Posterior vena cava (tissue), 2 donors: ENCODE measurements at regions of chr1 and their contacts with region 1.

Region 1: GRCh38 chr1:145918144-145918992 is at the start of gene PEX11B:
- DNase-seq: peak; percentile 96
- total RNA-seq, gene PEX11B: 19.8 to 24.4 TPM

Region 2: DNA sequence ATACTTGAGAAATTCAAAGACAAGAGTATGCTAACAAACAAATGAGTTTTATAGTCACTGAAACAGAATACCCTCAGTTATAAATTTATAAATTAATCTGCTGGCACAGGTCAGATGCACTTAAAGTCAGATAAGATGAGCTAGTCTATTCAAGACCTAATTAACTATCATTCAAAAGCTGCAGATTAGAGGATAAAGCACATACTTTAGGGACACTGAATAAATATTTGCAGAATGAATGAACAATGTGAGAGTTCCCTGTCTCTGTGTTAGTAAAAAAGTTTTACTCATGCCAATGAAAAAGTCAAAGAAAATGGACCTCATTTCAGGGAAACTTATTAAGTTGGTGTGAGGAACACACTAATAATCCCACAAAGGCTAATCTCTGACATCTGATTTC is 152.8 kb before region 1 on chr1:
- intact Hi-C with region 1: no loop called
- DNase-seq: no peak

Region 3: GRCh38 chr1:145858894-145859490 is 59.4 kb before region 1 on chr1 and contains the start of gene PIAS3:
- intact Hi-C with region 1: loop called in 1 of 2 experiments (anchors 10 kb)
- DNase-seq: peak; percentile 98
- total RNA-seq, gene PIAS3: 28.6 to 34.7 TPM

Region 4: GRCh38 chr1:145879775-145880174 is 38.6 kb before region 1 on chr1:
- intact Hi-C with region 1: no loop called
- DNase-seq: no peak

Region 5: DNA sequence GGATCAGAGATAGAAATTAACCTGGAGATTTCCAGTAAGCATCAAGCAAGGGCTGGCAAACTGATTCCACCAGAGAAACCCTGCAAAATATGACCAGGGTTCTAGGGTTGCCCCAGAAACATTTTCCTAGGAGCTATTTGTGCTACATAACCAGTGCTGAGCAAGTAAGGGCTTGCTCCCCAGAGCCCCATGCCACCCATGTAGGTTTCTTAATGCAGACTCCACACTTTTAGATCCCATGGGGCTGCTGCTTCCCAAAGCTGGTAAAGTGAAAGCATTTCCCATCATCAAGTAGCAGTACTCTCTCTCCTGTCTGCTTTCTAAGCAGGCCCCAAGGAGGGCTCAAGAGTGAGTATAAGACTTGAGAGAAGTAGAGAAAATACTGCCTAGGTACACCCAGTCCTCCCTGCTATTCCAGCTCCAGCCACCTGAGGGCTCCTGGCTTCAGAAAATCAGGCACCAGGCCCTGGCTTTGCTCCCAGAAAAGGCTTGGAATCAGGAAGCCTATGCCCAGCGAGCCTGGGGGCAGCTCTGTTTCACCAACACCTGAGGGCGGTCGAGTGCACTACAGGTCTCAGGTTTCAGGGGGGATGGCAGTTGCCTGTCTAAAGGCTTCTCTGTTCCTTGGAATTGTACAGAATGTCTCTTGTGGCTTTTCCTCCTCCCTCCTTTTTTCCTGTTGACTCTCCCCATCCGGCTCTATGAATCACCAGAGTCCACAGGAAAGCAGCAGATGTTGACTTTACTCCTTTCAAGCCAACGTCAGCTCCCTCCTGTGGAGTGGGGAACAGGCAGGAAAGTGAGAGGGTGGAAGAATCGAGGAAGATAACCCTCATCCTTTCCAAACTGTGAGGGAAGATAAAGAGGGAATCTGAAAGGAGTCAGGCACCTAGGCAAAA is 26.5 kb before region 1 on chr1:
- intact Hi-C with region 1: no loop called
- DNase-seq: peak; percentile 95

Region 6: GRCh38 chr1:145906954-145907753 is 11.2 kb before region 1 on chr1:
- intact Hi-C with region 1: loop called in 1 of 2 experiments (anchors 1 kb)
- DNase-seq: peak; percentile 52

Region 7: GRCh38 chr1:145963995-145964901 is 45.9 kb after region 1 on chr1 and contains the starts of genes ANKRD34A and POLR3GL:
- intact Hi-C with region 1: loop called in 1 of 2 experiments (anchors 5 kb)
- DNase-seq: peak; percentile 97
- total RNA-seq, gene ANKRD34A: 2.3 TPM
- total RNA-seq, gene POLR3GL: 22.8 to 23.8 TPM